ENCODE measurements at regions of chr15 and their contacts with region 1.

Region 1: GRCh38 chr15:29159771-29160455 is 109.7 kb downstream of the NSMCE3 start:
- DNase-seq: no peak
- ATAC-seq: no peak
- H3K4me3 ChIP-seq: no peak overlapping the region
- H3K27ac ChIP-seq: no peak overlapping the region
- H3K4me1 ChIP-seq: peaks cover 17% of the 10 kb centered on the region
- H3K27me3 ChIP-seq: peaks cover 5% of the 10 kb centered on the region; the same call in 1 of the 2 replicates
- CTCF ChIP-seq: no peak

Region 2: DNA sequence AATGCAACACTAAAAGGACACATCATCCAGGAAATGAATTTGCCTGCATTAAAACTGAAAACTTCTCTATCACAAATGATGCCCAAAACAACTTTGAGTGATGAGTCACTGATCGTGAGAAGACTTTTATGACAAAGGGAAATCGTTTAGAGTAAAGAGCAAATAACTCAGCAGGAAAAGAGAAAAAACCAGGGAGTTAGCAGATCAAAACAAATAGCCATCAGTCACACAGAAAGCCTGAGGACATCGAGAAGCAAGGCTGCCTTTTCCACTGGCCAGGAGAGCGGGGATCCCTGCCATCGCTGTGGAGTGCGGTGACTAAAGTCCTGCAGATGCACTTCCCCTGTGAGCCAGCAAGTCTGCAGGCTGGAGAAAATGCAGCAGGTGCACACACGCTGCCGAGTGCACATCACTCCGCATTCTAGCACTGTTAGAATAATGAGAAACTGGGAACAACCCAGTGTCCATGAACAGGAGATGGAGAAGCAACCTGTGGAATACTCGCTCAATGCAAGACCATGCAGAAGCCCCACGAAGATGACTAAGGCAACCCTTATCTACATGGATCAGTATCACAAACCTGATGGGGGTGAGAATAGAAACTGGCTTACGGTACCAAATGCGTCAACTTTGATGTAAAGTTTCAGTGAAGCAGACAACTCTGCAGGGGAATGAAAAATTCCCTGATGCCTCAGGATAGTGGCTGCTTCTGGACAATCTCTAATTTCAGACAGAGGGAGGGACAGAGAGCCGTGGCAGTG is 23.3 kb after region 1 on chr15:
- CTCF ChIA-PET with region 1: no interaction called
- POLR2A ChIA-PET with region 1: no interaction called
- intact Hi-C with region 1: loop called (anchors 2 kb)
- DNase-seq: peak; percentile 75
- ATAC-seq: peak; percentile 96
- H3K4me3 ChIP-seq: no peak overlapping the region
- H3K27ac ChIP-seq: peak overlapping the region; percentile 37
- H3K4me1 ChIP-seq: peaks cover 15% of the 10 kb centered on the region
- H3K27me3 ChIP-seq: peaks cover 30% of the 10 kb centered on the region
- CTCF ChIP-seq: no peak

Measured in PC-3 (cell line).